AG04449 (cell line): ENCODE measurements at regions of chr1 and their contacts with region 1.

Region 1: GRCh38 chr1:156445789-156446263 is 54.7 kb downstream of the MEF2D start:
- DNase-seq: no peak
- H3K4me3 ChIP-seq: no peak overlapping the region
- CTCF ChIP-seq: peak; percentile 98

Region 2: DNA sequence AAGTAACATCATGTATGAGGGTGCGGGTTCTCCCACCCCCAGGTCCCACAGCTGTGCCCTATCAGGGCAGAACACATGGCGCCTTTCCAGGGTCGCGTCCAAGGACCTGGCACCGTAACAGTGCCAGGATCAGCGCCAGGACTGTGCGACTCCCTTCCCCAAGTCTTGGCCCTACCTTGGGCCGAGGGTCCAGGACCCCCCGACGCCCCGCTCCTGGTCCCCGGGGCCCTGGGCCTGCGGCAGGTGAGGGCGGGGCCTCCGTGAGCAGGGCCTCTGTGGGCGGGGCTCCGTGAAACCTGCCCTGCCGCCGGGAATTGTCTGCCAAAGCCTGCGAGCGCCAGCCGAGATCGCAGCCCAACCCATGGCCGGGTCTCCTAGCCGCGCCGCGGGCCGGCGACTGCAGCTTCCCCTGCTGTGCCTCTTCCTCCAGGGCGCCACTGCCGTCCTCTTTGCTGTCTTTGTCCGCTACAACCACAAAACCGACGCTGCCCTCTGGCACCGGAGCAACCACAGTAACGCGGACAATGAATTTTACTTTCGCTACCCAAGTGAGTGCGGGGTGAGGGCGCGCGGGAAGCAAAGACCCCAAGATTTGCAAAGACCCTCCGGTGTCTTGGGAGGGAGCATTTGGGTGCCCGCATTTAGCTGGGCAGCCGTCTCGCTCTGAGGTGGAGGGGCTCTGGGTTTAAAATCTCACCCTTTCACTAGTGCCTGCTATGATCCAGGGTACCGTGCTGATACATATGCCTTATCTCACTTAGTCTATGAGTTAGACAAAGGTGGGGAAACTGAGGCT is 76.7 kb before region 1 on chr1 and contains the start of gene RHBG:
- CTCF ChIA-PET with region 1: interaction called, 712 read pairs
- POLR2A ChIA-PET with region 1: no interaction called
- DNase-seq: no peak
- H3K4me3 ChIP-seq: peak within 1 kb of the TSS; percentile 4
- CTCF ChIP-seq: no peak

Region 3: DNA sequence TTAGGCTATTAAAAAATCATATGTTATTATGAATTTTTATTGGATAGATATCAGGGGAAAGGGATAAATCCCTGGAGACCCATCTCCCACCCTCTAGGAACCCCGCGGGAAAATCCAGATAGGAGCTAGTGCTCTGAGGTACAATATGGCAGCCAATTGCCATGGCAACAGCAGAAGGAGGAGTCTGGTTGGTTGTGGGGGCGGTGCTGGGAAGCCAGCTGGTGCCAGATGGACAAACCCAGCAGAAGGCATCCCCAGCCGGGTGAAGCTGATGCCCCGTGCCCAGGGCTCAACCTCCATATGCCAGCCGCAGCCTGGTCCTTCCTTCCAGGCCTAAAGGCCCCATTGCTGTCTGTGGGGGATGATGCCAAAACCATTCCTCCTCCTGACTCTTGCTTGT is 38.5 kb before region 1 on chr1:
- CTCF ChIA-PET with region 1: interaction called, 23 read pairs
- POLR2A ChIA-PET with region 1: no interaction called
- DNase-seq: no peak
- H3K4me3 ChIP-seq: no peak overlapping the region
- CTCF ChIP-seq: no peak

Region 4: DNA sequence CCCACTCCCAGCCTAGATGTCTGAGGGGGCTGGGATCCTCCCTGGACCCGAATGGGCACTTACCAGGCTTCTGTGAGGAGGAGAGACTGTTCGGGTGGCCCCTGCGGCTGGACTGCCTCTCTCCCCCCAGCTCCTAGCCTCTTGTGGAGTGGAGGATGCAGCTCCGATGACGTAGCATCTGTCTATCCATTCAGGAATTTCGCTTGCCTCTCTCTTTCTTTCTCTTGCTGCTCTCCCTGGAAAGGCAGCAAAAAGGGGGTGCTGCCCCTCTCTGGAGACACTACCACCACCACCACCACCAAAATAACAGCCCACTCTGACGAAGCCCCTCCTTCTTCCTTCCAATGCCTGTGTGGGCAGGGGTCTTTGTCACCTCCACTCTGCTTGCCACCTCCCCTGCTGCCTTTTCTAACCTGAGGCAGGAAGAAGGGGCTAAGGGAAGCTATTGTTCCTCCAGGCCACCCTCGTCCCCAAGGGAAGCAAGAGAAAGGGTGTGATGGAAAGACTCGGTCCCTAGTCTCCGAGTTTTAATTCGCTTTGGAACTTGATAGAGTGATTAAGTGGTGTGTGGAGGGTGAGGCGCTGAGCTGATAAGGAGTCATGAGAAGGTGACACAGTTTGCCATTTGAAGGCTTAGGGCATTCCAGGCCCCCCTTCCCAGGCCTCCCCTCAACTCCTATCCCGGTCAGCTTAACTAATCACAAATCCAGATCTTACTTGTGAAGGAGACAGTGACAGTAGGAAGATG is 16.3 kb before region 1 on chr1:
- CTCF ChIA-PET with region 1: interaction called, 65 read pairs
- POLR2A ChIA-PET with region 1: no interaction called
- DNase-seq: no peak
- H3K4me3 ChIP-seq: no peak overlapping the region
- CTCF ChIP-seq: no peak

Region 5: DNA sequence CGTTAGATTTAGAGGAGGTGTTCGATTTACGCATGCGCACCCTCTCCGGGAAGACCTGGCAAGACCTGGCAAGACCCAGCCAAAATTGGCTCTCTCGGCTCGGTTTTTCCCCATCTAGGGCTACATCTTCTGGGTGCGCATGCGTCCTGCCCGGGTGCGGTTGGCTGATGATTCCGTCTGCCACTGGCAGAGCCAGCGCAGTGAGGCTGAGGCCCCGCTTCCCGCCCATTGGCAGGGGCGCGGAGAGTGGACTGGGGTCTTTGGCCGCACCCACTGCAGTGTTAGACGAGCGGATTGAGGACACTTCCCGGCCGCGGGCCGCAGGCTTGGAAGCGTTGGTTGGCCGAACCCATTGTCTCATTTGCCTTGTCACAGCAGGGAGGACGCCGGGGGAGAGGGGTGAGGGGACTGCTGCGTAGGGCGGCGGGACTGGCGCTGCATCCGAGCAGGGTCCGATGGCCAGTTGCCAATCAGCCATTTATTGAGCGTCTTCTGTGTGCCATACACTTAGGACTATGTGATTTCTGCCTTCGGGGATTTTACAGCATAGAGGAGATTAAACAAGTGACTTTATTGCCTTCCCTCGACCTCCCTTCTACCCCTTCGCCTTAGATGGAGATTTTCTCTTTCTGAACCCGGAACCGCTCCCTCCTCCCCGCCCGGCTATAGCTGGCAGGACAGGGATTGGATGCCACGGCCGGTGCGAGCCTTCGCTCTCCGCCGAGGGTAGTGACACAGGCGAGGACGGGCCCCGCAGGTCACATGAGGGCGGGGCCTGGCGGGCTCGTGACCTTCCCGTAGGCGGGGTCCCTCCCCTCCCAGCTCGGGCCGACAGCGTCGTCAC is 11.0 kb after region 1 on chr1:
- CTCF ChIA-PET with region 1: interaction called, 49 read pairs
- POLR2A ChIA-PET with region 1: no interaction called
- DNase-seq: peak; percentile 87
- H3K4me3 ChIP-seq: peak overlapping the region; percentile 64
- CTCF ChIP-seq: no peak

Region 6: GRCh38 chr1:156608036-156608674 is 162.3 kb after region 1 on chr1:
- CTCF ChIA-PET with region 1: interaction called, 17 read pairs
- POLR2A ChIA-PET with region 1: no interaction called
- DNase-seq: no peak
- H3K4me3 ChIP-seq: no peak overlapping the region
- CTCF ChIP-seq: peak; percentile 82